Esophagus muscularis mucosa (tissue), 4 donors: ENCODE measurements at regions of chr12 and their contacts with region 1.

Region 1: GRCh38 chr12:77724367-77724957 is 106.2 kb upstream of the NAV3 start:
- DNase-seq: no peak
- H3K4me3 ChIP-seq: no peak overlapping the region
- H3K27ac ChIP-seq: no peak overlapping the region
- H3K4me1 ChIP-seq: peaks cover 0 to 21% (median 7%) of the 10 kb centered on the region in 4 donors
- H3K27me3 ChIP-seq: no peaks in the 10 kb centered on the region
- CTCF ChIP-seq: peak; percentile 30 to 53 (median 38)
- EP300 ChIP-seq: no peak
- POLR2A ChIP-seq: no peak

Region 2: DNA sequence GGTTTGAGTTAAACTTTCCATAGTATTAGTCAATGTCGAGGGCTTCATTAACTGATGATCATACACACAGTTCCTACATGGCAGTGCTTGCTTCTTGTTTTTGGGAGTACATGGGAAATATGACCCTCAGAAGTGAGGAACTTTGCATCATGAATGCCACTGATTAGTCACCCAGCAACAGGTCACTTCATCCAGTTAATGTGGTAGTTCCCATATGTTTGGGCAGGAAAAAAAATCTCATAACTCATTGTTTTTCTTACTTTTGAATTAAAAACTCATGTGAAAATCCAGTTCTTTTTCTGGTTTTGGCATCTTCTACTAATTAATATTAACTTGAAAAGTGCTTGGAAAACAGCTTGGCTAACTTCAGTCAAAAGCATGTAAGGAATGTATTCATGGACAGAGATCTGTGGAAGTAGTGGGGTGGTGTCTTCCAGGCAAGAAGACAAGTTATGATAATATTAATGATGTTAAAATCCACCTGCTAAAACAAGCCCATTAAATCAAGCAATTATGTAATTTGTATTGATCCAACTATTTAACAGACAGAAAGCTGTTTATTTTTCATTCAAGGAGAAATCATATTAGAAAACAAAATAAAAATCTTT is 202.8 kb before region 1 on chr12:
- intact Hi-C with region 1: no loop called
- DNase-seq: no peak
- H3K4me3 ChIP-seq: no peak overlapping the region
- H3K27ac ChIP-seq: no peak overlapping the region
- H3K4me1 ChIP-seq: peaks cover 0 to 8% (median 2%) of the 10 kb centered on the region in 4 donors
- H3K27me3 ChIP-seq: no peaks in the 10 kb centered on the region
- CTCF ChIP-seq: no peak
- EP300 ChIP-seq: no peak
- POLR2A ChIP-seq: no peak

Region 3: DNA sequence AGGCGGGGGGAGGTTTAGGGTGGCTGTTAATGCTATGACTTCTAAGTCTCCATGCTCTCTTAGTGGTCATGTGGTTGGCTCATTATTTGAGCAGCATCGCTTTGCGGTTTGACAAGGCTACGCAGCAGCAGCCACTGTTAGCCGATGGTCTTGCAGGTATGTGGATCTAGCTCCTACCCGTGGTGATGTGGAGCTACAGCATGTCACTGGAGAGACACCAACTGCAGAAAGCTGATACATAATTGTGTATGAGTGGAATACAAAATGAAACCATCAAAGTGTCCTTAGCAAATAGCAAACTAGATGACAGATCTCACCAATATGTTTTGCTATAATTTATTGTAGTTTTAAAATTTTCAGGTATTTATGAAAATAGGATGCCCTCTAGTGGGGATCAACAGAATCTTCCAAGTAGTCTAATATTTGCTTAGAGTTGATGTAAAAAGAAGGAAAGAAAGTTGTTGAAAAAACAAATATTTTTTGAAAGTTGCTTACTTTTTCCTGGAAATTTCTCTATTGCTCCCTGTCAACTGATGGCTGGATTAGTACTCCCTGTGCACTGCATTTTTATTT is 201.2 kb after region 1 on chr12:
- intact Hi-C with region 1: loop called (anchors 5 kb)
- DNase-seq: no peak
- H3K4me3 ChIP-seq: peak overlapping the region in 1 of 4 donors; percentile 1
- H3K27ac ChIP-seq: no peak overlapping the region
- H3K4me1 ChIP-seq: peaks cover 0 to 8% (median 0%) of the 10 kb centered on the region in 4 donors
- H3K27me3 ChIP-seq: no peaks in the 10 kb centered on the region
- CTCF ChIP-seq: peak; percentile 56 to 74 (median 66)
- EP300 ChIP-seq: no peak
- POLR2A ChIP-seq: no peak